Right ventricle myocardium inferior (tissue), 1 donor: ENCODE measurements at regions of chr11 and their contacts with region 1.

Region 1: DNA sequence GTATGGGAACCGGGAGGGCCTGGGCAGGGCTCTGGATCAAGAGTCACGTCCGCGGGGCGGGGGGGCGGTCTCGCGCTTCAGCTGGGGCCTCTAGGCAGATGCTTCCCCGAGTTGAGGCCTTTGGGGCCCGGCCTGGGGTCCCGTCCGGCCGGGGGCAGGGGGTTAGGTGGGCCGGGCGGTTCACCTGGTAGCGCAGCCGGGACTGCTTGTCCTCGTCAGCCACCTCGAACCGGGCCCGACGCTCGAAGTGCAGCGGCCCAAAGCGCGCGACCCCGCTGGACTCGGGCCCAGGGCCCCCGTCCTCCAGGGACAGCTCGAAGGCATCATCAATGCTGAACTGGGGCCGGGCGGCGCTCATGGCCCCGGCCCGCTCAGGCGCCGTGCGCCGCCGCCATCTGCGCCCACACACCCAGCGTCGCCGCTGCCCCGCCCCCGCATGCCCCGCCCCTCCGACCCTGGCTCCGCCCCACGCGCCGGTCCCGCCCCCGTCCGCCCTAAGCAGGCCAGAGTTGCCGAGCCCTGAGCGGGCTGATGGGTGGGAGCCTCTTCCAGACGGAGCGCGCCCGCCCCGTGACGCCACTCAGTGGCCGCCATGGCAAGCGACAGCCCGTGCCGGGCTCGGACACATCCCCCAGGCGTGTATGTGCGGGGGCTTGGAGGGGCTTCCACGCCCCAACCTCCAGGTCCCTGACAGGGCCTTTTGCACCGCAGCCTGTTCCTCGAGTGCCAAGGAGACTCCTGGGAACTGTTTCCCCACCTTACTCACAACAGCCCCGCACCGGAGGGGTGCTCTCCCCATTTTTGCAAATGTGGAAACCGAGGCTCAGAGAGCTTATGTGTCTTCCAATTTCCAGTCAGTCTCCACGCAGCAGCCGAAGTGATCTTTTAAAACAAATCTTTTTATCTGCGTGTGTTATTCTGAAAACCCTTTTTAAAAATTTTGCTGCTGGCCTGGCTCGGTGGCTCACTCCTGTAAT is at the start of gene TMEM134:
- DNase-seq: peak; percentile 97
- ATAC-seq: peak; percentile 95
- total RNA-seq, gene TMEM134: 85.3 TPM

Region 2: DNA sequence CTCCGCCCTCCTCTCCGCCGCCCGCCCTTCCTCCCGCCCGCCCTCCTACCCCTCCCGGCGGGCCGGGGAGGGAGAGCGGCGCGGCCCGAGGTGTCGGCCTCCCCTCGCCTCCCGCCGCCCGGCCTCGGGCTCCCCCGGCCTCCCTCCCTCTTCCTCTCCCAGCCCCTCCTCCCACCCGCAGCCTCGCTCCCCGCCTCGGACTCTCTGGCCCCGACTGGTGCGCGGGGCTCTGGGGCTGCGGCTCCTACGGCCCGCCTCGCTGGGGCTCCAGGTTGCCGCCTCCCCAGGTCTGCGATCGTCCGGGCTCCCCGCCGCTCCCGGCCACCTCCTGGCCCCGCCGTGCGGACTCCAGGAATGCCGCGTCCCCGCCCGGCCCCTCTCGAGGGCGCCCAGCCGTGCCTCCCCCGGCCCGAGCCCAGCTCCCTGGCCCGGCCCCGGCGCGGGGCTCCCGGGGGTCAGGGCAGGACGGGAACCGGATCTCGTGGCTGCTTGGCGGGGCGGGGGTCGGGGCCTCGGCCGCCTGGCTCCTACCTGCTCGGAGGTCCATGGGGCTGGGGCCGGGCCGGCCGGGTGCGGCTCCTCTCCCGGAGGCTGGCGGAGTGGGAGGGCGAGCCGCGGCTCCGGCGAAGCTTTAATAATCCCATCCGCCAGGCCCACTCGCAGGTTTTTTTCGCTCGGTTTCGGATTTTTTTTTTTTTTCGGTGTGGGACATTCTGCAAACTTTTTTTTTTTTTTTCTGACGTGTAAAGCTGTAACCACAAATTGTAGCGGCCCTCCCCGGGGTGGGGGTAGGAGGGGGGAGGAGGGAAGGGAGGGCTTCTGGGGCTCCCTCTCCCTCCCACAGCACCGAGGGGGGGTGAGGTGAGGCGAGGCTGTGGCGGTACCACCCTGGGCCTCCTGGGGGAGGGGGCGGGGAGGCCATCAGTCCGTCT is 95.9 kb before region 1 on chr11 and contains the start of gene CLCF1:
- intact Hi-C with region 1: no loop called
- DNase-seq: peak; percentile 84
- ATAC-seq: peak; percentile 61
- total RNA-seq, gene CLCF1: 0.51 TPM

Region 3: GRCh38 chr11:67428052-67428914 is 40.8 kb before region 1 on chr11 and contains the start of gene RPS6KB2:
- intact Hi-C with region 1: loop called (anchors 1 kb)
- DNase-seq: peak; percentile 99
- ATAC-seq: peak; percentile 92
- total RNA-seq, gene RPS6KB2: 27.8 TPM

Region 4: GRCh38 chr11:67442504-67443405 is 26.4 kb before region 1 on chr11:
- intact Hi-C with region 1: loop called (anchors 2 kb)
- DNase-seq: no peak
- ATAC-seq: no peak

Region 5: DNA sequence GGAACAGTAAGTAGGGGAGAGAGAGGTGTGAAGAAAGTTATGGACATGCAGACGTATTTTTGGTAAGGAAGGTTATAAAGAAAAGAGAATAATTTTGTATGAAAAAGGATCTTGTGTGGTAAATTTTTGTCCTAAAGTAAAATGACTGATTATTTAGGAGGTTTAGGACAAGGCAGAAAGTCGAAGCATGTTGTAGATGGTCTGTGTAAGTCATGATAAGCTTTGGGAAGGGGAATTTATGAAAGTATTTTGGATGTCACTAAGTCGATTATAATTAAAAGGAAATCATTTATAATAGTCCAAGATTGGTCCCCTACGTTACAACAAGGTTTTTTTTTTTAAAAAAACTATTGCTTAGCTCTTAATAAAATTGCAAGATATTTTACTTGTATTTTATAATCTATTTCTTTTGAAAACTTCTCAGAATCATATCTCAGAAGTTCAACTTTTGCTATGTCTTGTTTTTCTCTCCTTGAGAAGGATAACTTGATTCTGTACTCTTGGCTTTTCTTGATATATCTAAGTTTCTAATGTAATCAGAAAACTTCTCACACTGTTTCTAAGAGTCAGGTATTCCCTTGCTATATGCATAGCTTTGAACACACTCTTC is 65.1 kb after region 1 on chr11:
- intact Hi-C with region 1: no loop called
- DNase-seq: no peak
- ATAC-seq: no peak